Heart right ventricle (tissue), 16 donors: ENCODE measurements at regions of chr5 and their contacts with region 1.

Region 1: DNA sequence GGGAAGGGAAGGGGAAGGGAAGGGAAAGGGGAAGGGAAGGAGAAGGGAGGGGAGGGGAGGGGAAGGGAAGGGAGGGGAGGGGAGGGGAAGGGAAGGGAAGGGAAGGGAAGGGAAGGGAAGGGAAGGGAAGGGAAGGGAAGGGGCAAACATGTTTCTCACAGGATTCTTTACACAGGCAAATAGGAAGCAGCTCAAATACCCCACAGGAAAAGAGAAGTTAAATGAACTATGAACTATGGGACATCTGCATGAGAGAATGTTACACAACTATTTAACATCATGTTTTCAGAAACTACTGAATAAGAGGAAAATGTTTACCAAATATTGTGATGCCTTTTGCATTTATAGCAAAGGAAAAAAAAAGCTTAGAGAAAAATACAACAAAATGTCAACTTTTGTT is 125.4 kb upstream of the SLC30A5 start:
- DNase-seq: no peak
- ATAC-seq: no peak
- H3K4me3 ChIP-seq: no peak overlapping the region
- H3K27ac ChIP-seq: no peak overlapping the region
- H3K4me1 ChIP-seq: no peaks in the 10 kb centered on the region
- H3K27me3 ChIP-seq: peaks cover 0 to 14% (median 0%) of the 10 kb centered on the region in 7 donors
- CTCF ChIP-seq: no peak

Region 2: DNA sequence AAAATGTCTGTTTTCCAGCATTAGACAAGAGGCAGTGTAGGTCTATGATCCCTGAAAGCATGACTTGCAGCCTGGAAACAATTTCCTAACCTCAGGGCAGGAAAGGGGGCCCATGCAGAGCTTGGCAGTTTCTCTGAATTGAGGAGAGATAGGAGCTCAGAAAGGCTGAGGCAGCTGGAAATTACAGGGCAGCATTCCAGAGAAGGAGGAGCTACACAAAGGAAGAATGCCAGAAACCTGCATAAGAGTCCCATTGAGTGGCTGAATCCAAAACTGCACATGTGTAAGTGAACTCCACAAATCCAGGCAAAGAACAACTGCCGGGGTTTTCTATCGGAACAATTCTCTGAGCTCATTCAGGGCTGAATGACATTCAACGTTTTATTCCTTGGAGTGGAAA is 406.1 kb before region 1 on chr5:
- intact Hi-C with region 1: loop called in 1 of 10 experiments (anchors 5 kb)
- DNase-seq: peak in 1 of 2 donors; percentile 68
- ATAC-seq: peak; percentile 64 to 95 (median 86)
- H3K4me3 ChIP-seq: no peak overlapping the region
- H3K27ac ChIP-seq: no peak overlapping the region
- H3K4me1 ChIP-seq: peaks cover 0 to 11% (median 4%) of the 10 kb centered on the region in 9 donors
- H3K27me3 ChIP-seq: no peaks in the 10 kb centered on the region
- CTCF ChIP-seq: no peak

Region 3: GRCh38 chr5:68628082-68628814 is 340.2 kb before region 1 on chr5:
- intact Hi-C with region 1: no loop called
- DNase-seq: no peak
- ATAC-seq: no peak
- H3K4me3 ChIP-seq: no peak overlapping the region
- H3K27ac ChIP-seq: no peak overlapping the region
- H3K4me1 ChIP-seq: no peaks in the 10 kb centered on the region
- H3K27me3 ChIP-seq: no peaks in the 10 kb centered on the region
- CTCF ChIP-seq: no peak

Region 4: GRCh38 chr5:68862560-68862959 is 105.9 kb before region 1 on chr5:
- intact Hi-C with region 1: no loop called
- DNase-seq: no peak
- ATAC-seq: no peak
- H3K4me3 ChIP-seq: no peak overlapping the region
- H3K27ac ChIP-seq: no peak overlapping the region
- H3K4me1 ChIP-seq: no peaks in the 10 kb centered on the region
- H3K27me3 ChIP-seq: peaks cover 0 to 3% (median 0%) of the 10 kb centered on the region in 7 donors
- CTCF ChIP-seq: no peak